Activated CD4-positive, alpha-beta T cell treated with anti-CD3 and anti-CD28 coated beads, Interleukin-2, amount 10 ng/mL, durations not matched to agents 7 days and 5 days (primary cell): ENCODE measurements at regions of chr17 and their contacts with region 1.

Region 1: GRCh38 chr17:80765241-80765961 is 220.8 kb downstream of the RPTOR start:
- DNase-seq: no peak
- H3K4me3 Mint-ChIP-seq: peak overlapping the region; percentile 53
- H3K27ac Mint-ChIP-seq: peak overlapping the region; percentile 93
- H3K4me1 Mint-ChIP-seq: peaks cover 81% of the 10 kb centered on the region
- H3K27me3 Mint-ChIP-seq: no peaks in the 10 kb centered on the region

Region 2: GRCh38 chr17:80565343-80566053 is 199.9 kb before region 1 on chr17:
- CTCF ChIA-PET with region 1: no interaction called
- POLR2A ChIA-PET with region 1: no interaction called
- DNase-seq: no peak
- H3K4me3 Mint-ChIP-seq: no peak overlapping the region
- H3K27ac Mint-ChIP-seq: no peak overlapping the region
- H3K4me1 Mint-ChIP-seq: peaks cover 18% of the 10 kb centered on the region
- H3K27me3 Mint-ChIP-seq: no peaks in the 10 kb centered on the region

Region 3: GRCh38 chr17:80780381-80781198 is 15.2 kb after region 1 on chr17:
- CTCF ChIA-PET with region 1: interaction called, 20 read pairs
- POLR2A ChIA-PET with region 1: interaction called, 4 read pairs
- DNase-seq: peak; percentile 53
- H3K4me3 Mint-ChIP-seq: peak overlapping the region; percentile 56
- H3K27ac Mint-ChIP-seq: peak overlapping the region; percentile 94
- H3K4me1 Mint-ChIP-seq: peaks cover 87% of the 10 kb centered on the region
- H3K27me3 Mint-ChIP-seq: no peaks in the 10 kb centered on the region

Region 4: DNA sequence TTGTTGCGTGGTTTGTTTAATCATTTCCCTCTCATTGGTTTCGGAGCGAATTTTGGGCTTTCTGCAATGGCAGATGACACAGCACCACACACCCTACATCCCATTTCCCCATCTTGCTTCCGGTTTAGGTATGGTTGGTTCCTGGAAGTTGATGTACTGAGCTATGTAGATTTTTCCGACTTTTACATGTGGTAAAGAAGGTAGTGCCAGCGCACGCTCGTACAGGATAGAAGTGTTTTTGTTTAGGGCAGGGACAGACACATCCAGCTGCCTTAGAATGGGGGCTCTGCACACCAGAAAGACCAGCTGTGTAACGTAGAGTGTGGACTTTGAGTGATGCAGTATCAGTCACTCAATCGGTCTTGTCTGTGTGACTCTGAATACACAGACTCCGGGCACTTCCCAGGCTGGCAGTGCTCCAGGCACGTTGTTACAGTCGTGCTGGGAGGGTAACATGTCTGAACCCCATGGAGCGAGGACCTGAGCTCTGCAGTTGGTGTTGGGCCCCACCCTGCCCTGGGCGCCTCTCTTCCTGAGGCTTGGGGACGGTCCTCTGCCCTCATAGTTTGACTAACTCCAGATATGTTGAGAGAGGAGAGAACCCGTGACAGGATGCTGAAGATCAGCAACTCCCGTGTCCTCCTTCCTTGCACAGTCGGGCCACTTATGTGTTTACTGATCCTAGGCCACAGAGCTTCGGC is 54.2 kb after region 1 on chr17:
- CTCF ChIA-PET with region 1: no interaction called
- POLR2A ChIA-PET with region 1: no interaction called
- DNase-seq: peak; percentile 39
- H3K4me3 Mint-ChIP-seq: no peak overlapping the region
- H3K27ac Mint-ChIP-seq: peak overlapping the region; percentile 94
- H3K4me1 Mint-ChIP-seq: peaks cover 86% of the 10 kb centered on the region
- H3K27me3 Mint-ChIP-seq: no peaks in the 10 kb centered on the region